Ascending aorta (tissue), 2 donors: ENCODE measurements at regions of chr19 and their contacts with region 1.

Region 1: DNA sequence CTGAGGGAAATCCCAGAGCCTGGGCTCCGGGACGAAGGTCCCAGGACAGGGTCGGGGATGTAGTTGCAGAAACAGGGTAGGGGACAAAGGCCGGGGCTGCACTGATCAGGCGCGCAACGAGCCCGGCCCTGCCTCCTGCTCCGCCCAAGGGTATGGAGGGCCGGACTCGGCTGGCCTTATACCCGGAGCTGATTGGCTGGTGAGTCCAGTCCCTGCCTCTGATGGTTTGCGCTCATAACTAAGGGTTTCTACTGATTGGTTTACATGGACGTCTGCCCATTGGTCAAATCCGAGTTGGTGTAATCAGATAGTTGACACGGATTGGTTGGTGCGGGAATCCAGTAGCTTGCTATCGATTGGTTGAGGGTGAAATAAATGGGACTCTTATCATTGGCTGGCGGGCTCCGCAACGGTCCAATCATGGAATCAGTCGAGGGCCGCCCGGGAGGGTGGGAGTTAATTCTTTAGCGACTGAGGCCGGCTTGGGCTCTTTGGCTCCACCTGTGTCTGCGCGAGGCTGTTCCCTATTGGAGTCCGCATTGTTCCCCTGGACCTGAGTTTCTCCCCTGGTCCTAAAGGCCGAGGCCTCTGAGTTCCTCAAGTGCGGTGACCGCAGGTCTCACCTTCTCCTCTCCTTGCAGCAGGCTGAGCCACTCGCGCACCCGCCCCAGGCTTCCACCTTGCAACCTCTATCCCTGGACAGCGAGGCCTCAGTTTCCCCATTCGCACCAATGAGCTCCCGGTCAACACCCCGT is 570 bp upstream of the MPND start:
- DNase-seq: peak; percentile 94 to 99
- H3K4me3 ChIP-seq: peak overlapping the region; percentile 68 to 94
- H3K27ac ChIP-seq: peak overlapping the region; percentile 80 to 87
- H3K4me1 ChIP-seq: peaks cover 3 to 8% of the 10 kb centered on the region in 2 donors
- H3K27me3 ChIP-seq: no peaks in the 10 kb centered on the region
- CTCF ChIP-seq: peak in 2 of 3 experiments; percentile 27 to 29

Region 2: DNA sequence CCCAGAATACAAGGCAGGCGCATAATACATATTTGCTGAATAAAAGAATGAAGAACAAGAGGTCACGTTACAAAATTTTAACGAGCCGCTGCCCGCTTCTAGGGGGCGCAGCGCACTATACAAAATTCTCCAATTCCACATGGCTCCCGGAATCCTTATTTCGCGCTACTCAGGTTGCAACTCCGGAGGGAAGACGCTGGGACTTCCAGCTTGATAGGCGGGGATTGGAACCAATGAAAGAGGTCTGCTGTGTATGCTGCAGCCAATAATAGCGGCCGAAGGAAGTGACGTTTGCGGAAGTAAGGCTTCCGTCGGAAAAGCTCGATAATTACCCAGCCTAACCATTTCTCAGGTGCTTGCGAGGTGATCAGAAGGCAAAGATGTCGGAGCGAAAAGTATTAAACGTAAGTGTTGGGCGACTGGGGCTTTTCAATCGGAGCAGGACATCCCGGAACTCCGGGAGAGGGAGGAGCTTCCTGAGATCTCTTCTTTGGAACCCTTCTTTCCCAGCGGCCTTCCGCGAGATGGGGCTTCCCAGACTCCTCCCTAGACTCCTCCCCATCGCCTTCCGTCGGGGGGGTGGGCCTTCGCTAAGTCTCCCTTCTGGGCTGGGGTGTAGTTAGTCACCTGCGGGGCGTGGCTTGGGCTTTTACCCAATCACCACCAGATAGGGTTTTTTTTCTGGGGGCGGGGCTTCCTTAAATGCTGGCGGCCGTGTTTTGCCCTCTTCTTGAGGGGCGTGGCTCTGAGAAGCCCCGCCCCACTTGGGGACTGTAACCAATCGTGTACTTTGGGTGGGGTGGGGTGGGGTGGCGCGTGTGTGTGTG is 95.8 kb before region 1 on chr19 and contains the start of gene YJU2:
- intact Hi-C with region 1: loop called (anchors 2 kb)
- DNase-seq: peak; percentile 97 to 99
- H3K4me3 ChIP-seq: peak within 1 kb of the TSS; percentile 67 to 77
- H3K27ac ChIP-seq: peak within 1 kb of the TSS; percentile 90 to 96
- H3K4me1 ChIP-seq: peaks cover 0 to 4% of the 10 kb centered on the region in 2 donors
- H3K27me3 ChIP-seq: no peaks in the 10 kb centered on the region
- CTCF ChIP-seq: peak; percentile 39 to 52 (median 41)
- total RNA-seq, gene YJU2: 64.6 TPM

Region 3: DNA sequence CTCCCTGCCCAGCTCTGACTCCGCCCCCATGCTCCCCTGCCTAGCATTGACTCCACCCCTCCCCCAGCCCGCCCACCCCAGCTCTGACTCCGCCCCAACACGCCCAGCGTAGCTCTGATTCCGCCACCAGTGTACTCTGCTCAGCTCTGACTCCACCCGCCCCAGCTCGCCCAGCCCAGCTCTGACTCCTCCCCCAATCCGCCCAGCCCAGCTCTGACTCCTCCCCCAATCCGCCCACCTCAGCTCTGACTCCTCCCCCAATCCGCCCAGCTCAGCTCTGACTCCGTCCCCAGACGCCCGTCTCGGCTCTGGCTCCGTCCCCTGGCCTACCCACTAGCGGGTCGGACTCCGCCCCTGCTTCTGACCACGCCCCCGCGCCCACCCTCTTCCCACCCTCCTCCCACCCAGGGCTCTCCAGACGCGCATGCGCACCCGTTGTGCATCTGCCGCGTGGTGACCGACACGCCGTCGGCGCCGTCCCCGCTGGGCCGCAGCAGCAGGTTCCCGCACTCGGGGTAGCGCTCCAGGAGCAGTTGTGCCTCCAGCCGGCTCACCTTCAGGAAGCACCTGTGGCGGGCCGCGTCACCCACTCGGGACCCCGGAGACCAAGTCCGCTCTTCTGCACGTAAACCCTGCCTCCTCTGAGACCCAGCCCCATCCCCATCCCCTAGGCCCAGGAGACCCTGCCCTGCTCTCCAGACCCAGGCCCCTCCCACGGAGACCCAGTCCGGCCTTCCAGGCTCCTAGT is 14.4 kb before region 1 on chr19:
- intact Hi-C with region 1: loop called (anchors 1 kb)
- DNase-seq: peak; percentile 74 to 94
- H3K4me3 ChIP-seq: peak overlapping the region; percentile 50 to 66
- H3K27ac ChIP-seq: no peak overlapping the region
- H3K4me1 ChIP-seq: peaks cover 6 to 8% of the 10 kb centered on the region in 2 donors
- H3K27me3 ChIP-seq: no peaks in the 10 kb centered on the region
- CTCF ChIP-seq: no peak

Region 4: GRCh38 chr19:4375164-4376027 is 32.6 kb after region 1 on chr19:
- intact Hi-C with region 1: loop called (anchors 1 kb)
- DNase-seq: peak in 1 of 2 donors; percentile 82
- H3K4me3 ChIP-seq: peak overlapping the region in 1 of 2 donors; percentile 16
- H3K27ac ChIP-seq: peak overlapping the region; percentile 91 to 98
- H3K4me1 ChIP-seq: peaks cover 58 to 86% of the 10 kb centered on the region in 2 donors
- H3K27me3 ChIP-seq: no peaks in the 10 kb centered on the region
- CTCF ChIP-seq: peak; percentile 25 to 49 (median 25)

Region 5: DNA sequence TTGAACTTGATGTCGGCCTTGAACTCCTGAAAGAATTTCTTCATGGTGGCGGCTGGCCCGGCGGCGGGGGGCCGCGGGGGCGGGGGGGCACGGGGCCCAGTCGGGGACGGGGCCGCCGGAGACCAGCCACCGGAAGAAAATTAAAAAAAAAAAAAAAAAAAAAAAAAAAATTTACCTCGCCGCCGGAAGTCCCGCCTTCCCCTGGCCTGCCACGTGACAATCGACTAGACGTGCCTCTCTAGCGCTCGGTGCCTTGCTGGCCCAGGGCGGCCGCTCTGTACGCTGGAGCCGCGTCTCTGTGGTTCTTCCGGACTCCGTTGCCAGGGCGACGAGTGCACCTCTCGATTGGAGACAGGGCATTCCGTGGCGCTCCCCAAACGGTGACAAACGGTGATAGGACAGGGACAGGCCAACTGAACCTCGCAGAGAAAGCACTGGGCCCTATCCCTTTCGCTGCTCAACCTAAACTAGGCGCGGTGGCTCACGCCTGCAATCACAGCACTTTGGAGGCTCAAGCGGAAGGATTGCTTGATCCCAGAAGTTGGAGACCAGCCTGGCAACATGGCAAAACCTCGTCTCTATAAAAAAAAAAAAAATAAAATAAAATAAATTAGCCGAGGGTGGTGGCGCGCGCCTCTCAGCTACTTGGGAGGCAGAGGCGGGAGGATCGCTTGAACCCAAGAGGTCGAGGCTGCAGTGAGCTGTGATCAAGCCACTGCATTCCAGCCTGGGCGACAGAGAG is 115.0 kb after region 1 on chr19 and contains the start of gene UBXN6:
- intact Hi-C with region 1: loop called (anchors 1 kb)
- DNase-seq: peak; percentile 88 to 99
- H3K4me3 ChIP-seq: peak within 1 kb of the TSS; percentile 86 to 99
- H3K27ac ChIP-seq: peak within 1 kb of the TSS; percentile 87 to 91
- H3K4me1 ChIP-seq: peaks cover 6 to 20% of the 10 kb centered on the region in 2 donors
- H3K27me3 ChIP-seq: no peaks in the 10 kb centered on the region
- CTCF ChIP-seq: no peak
- total RNA-seq, gene UBXN6: 560 TPM

Region 6: GRCh38 chr19:4471403-4472173 is 128.8 kb after region 1 on chr19:
- intact Hi-C with region 1: loop called (anchors 2 kb)
- DNase-seq: peak; percentile 99 to 100
- H3K4me3 ChIP-seq: peak overlapping the region; percentile 94 to 100
- H3K27ac ChIP-seq: peak overlapping the region; percentile 58 to 81
- H3K4me1 ChIP-seq: peaks cover 7 to 28% of the 10 kb centered on the region in 2 donors
- H3K27me3 ChIP-seq: no peaks in the 10 kb centered on the region
- CTCF ChIP-seq: no peak

Region 7: DNA sequence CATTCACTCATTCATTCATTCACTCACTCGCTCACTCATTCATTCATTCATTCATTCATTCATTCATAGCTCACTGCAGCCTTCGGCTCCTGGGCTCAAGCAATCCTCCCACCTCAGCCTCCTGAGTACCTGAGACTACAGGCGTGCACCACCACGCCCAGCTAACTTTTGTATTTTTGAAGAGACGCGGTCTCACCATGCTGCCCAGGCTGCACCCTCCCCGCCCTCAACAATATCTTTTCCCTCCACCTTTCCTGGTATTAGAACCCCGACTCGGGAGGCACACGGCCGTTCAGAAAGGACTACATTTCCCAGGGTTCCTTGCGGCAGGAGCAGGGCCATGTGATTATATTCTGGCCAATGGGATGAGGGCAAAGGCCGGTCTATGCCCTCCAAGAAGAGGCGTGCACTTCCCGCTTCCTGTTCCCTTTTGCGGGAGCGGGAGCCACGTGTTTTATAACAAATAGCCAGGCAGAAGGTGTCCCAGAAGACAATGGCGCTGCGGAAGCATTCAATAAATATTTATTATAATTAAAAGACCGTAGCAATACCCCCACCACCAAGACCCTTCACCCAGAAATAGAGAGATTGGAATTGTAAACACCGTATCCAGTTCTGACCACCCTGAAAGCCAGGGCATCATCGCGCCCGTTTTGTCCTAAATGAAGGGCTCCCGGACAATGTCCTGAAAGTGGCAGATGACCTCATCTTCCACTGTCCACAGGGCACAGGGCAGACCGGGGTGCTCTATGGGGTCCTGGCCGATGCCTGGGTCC is 472.8 kb after region 1 on chr19:
- intact Hi-C with region 1: no loop called
- DNase-seq: peak; percentile 76 to 94
- H3K4me3 ChIP-seq: peak overlapping the region in 1 of 2 donors; percentile 32
- H3K27ac ChIP-seq: peak overlapping the region; percentile 49 to 56
- H3K4me1 ChIP-seq: peaks cover 10 to 28% of the 10 kb centered on the region in 2 donors
- H3K27me3 ChIP-seq: no peaks in the 10 kb centered on the region
- CTCF ChIP-seq: no peak